Activated naive CD4-positive, alpha-beta T cell treated with anti-CD3 and anti-CD28 coated beads, Interleukin-2, amount 10 ng/mL, durations not matched to agents 7 days and 5 days (primary cell): ENCODE measurements at regions of chr7 and their contacts with region 1.

Region 1: DNA sequence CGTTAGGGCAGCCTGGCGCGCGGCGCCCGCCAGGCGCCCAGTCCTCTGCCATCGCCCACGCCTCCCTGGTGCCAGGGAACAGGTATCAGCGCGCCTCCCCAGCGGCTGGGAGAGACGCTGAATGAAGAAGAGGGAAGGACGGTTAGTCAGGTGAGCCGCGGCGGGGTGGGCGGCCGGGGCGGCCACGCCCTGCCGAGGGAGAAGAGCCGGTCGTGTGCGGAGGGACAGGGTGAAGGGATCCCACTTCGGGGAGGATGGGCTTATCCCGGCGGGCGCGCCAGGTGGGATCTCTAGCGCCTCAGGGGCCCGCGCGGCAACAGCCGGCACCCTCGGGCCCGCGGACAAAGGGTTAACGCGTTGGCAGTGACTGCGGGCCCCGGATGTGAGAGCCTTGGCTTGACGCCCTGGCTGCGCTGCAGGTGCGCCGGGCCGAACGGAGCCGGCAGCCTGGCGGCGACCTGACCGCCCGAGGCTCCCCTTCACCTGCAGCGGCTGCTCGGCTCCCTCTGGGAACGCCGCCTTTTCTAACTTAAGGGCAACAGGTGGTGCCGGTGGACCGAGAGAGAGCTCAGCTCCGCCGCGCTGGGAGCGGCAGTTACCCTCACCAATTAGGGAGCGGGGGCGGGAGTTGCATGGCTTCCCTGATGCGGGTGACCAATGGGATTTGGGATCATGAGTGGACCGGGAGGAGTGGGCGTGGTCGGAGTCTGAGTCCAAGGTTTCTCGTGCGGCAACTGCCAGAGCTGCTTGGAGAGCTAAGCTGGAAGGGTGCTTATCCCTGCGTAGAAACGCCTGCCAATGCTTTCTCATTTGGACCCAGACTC is at the start of gene ARL4A:
- DNase-seq: peak; percentile 96
- H3K4me3 Mint-ChIP-seq: peak within 1 kb of the TSS; percentile 94
- H3K27ac Mint-ChIP-seq: peak within 1 kb of the TSS; percentile 91
- H3K4me1 Mint-ChIP-seq: peaks cover 34% of the 10 kb centered on the region
- H3K27me3 Mint-ChIP-seq: no peaks in the 10 kb centered on the region

Region 2: GRCh38 chr7:12674849-12675248 is 12.3 kb before region 1 on chr7:
- CTCF ChIA-PET with region 1: interaction called, 15 read pairs
- DNase-seq: peak; percentile 63
- H3K4me3 Mint-ChIP-seq: no peak overlapping the region
- H3K27ac Mint-ChIP-seq: no peak overlapping the region
- H3K4me1 Mint-ChIP-seq: peaks cover 8% of the 10 kb centered on the region
- H3K27me3 Mint-ChIP-seq: no peaks in the 10 kb centered on the region

Region 3: DNA sequence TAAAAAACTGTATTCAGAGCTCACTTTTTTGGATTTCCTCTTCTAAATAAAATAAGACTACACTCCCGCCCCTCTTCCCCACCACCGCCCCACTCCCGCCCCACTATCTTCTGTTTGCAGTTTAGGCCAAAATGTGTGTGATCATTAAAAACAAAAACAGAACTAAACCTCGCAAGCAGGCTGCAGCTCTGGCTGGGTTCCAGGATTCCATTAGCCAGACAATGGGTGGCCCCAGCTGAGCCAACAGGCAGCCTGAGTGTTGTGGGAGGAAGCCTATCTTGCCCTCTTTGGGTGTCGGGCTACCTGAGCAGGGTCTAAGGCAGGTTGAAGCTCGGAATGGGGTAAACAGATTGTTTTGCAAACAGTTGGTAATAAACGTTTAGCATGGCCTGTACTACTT is 42.0 kb after region 1 on chr7:
- CTCF ChIA-PET with region 1: interaction called, 24 read pairs
- DNase-seq: no peak
- H3K4me3 Mint-ChIP-seq: no peak overlapping the region
- H3K27ac Mint-ChIP-seq: no peak overlapping the region
- H3K4me1 Mint-ChIP-seq: peaks cover 29% of the 10 kb centered on the region
- H3K27me3 Mint-ChIP-seq: peaks cover 4% of the 10 kb centered on the region

Region 4: DNA sequence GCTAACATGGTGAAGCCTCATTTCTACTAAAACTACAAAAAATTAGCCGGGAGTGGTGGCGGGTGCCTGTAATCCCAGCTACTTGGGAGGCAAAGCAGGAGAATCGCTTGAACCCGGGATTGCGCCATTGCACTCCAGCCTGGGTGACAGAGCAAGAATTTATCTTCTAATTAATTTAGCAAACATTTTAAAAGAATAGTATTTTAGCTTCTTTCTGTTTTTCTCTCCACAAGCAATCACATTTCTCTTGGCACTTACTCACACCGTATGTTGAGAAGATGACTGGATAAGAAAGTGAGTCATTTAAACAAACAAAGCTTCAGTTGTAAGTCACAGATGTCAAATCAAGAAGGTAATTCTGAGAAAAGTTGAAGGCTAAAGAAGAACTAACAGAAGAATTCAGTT is 264.3 kb after region 1 on chr7:
- CTCF ChIA-PET with region 1: no interaction called
- DNase-seq: no peak
- H3K4me3 Mint-ChIP-seq: no peak overlapping the region
- H3K27ac Mint-ChIP-seq: no peak overlapping the region
- H3K4me1 Mint-ChIP-seq: no peaks in the 10 kb centered on the region
- H3K27me3 Mint-ChIP-seq: no peaks in the 10 kb centered on the region